ENCODE measurements at regions of chr12 and their contacts with region 1.

Region 1: GRCh38 chr12:84658877-84659276 is 253.7 kb downstream of the SLC6A15 start:
- DNase-seq: no peak
- H3K4me3 ChIP-seq: no peak overlapping the region
- H3K27ac ChIP-seq: no peak overlapping the region
- H3K4me1 ChIP-seq: no peaks in the 10 kb centered on the region
- H3K27me3 ChIP-seq: no peaks in the 10 kb centered on the region
- CTCF ChIP-seq: no peak
- POLR2A ChIP-seq: no peak

Region 2: GRCh38 chr12:84599539-84599938 is 59.3 kb before region 1 on chr12:
- intact Hi-C with region 1: no loop called
- DNase-seq: no peak
- H3K4me3 ChIP-seq: no peak overlapping the region
- H3K27ac ChIP-seq: no peak overlapping the region
- H3K4me1 ChIP-seq: no peaks in the 10 kb centered on the region
- H3K27me3 ChIP-seq: no peaks in the 10 kb centered on the region
- CTCF ChIP-seq: no peak
- POLR2A ChIP-seq: no peak

Region 3: DNA sequence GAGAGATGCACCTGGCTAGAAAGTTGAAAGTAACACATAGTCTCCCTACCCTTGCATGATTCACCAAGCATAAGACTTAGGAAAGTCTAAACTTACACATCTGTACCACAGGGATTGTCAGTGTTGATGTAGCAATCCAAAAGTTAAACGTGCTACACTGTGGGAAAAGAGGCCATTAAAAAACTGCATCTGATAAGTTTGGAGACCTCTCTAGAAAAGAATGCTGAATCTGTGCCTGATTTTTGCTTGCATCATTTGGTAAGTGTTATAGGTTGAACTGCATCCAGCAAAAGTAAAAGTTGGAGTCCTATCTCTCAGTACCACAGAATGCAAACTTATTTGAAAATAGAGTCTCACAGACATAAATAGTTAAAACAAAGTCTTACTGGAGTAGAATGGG is 127.1 kb after region 1 on chr12:
- intact Hi-C with region 1: no loop called
- DNase-seq: no peak
- H3K4me3 ChIP-seq: no peak overlapping the region
- H3K27ac ChIP-seq: no peak overlapping the region
- H3K4me1 ChIP-seq: no peaks in the 10 kb centered on the region
- H3K27me3 ChIP-seq: no peaks in the 10 kb centered on the region
- CTCF ChIP-seq: no peak
- POLR2A ChIP-seq: no peak

Region 4: DNA sequence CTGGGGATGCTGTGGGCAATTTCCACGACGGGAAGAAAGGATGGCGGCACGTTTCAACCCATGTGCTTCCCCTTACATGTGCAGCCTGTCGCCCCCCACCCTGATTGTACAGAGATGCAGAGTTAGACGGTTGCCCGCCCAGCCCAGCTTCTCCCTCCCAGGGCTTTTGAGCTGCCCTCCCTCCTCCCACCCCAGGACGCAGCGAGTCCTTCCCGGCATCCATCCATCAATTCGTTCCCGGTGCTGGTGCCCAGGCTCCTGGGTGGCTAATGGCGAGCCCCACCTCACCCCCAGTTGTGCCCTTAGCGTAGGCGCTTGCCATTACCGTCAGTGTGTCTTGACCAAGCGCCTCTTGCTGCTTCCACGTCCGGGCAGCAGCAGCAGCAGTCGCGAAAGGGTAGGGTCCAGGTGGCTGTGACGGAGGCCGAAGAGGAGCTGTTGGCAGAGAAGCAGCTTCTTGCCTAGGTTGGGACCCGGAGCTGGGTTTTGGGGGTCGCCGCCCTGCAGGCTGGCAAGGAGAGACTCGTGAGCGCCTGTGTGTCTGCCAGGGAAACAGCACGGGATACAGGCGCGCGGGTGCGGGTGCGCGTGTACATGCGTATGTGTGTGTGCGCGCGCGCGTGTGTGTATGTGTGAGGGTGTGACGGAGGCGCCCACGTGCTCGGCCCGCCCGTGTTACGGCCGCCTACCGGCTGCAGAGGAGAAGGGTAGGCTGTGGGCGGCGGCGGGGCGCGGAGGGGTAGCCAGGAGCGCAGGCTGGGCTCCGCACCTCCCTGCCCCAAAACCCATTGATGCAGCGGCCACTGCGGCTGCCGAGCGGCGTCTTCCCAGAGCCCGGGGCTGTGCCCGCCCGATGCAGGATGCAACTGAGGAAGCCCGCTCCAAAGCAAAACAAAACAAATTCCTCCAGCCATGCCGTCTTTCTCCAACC is 253.6 kb after region 1 on chr12 and contains the start of gene SLC6A15:
- intact Hi-C with region 1: loop called (anchors 10 kb)
- DNase-seq: peak in 1 of 2 donors; percentile 51
- H3K4me3 ChIP-seq: peak within 1 kb of the TSS; percentile 43 to 68 (median 47)
- H3K27ac ChIP-seq: no peak within 1 kb of the TSS
- H3K4me1 ChIP-seq: peaks cover 0 to 4% of the 10 kb centered on the region in 2 donors
- H3K27me3 ChIP-seq: peaks cover 0 to 43% of the 10 kb centered on the region in 2 donors
- CTCF ChIP-seq: peak in 1 of 3 donors; percentile 11
- POLR2A ChIP-seq: no peak
- total RNA-seq, gene SLC6A15: 2.0 to 2.2 TPM in 2 of 3 donors, not detected in the other